ENCODE measurements at regions of chr12 and their contacts with region 1.

Region 1: GRCh38 chr12:591167-592023 is 71.8 kb downstream of the NINJ2 start:
- DNase-seq: peak; percentile 90

Region 2: DNA sequence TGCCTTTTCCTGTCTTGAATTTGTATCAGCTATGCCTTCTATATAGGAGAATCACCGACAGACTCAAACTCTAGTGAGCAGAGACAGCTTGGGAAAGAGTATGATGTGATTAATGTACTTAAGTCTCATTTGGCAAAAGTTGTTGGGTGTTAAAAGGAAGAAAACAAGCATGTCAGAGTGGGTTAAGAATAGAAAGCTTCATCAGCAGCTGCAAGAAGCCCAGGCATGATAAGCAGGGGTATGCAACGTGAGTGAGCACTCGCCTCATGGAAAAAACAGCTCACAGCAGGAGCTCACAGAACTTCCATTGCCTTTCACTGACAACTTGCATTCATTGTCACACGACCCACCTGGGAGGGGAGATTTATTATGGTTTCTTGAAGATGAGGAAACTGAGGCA is 125.1 kb after region 1 on chr12:
- intact Hi-C with region 1: loop called (anchors 1 kb)
- DNase-seq: peak; percentile 77

Measured in cardiac septum (tissue), 1 donor.